Naive thymus-derived CD4-positive, alpha-beta T cell (primary cell): ENCODE measurements at regions of chr1 and their contacts with region 1.

Region 1: GRCh38 chr1:154936555-154937084 is at the start of gene PMVK:
- DNase-seq: peak; percentile 84 to 99 (median 97)
- ATAC-seq: peak; percentile 92
- H3K4me3 ChIP-seq: peak within 1 kb of the TSS; percentile 68
- H3K4me3 Mint-ChIP-seq: peak within 1 kb of the TSS; percentile 86 to 99 (median 95)
- H3K27ac ChIP-seq: peak within 1 kb of the TSS; percentile 97
- H3K27ac Mint-ChIP-seq: peak within 1 kb of the TSS; percentile 96 to 100 (median 99)
- H3K4me1 ChIP-seq: peaks cover 25 to 38% of the 10 kb centered on the region in 2 donors
- H3K4me1 Mint-ChIP-seq: peaks cover 41 to 68% (median 50%) of the 10 kb centered on the region in 7 donors
- H3K27me3 ChIP-seq: no peaks in the 10 kb centered on the region
- H3K27me3 Mint-ChIP-seq: no peaks in the 10 kb centered on the region
- total RNA-seq, gene PMVK: 11.3 to 35.1 (median 12.6) TPM

Region 2: GRCh38 chr1:154479764-154480421 is 456.7 kb before region 1 on chr1:
- CTCF ChIA-PET with region 1: no interaction called
- POLR2A ChIA-PET with region 1: no interaction called
- intact Hi-C with region 1: loop called in 1 of 2 experiments (anchors 2 kb)
- DNase-seq: peak in 8 of 9 donors; percentile 39 to 78 (median 66)
- ATAC-seq: peak; percentile 90
- H3K4me3 ChIP-seq: no peak overlapping the region
- H3K4me3 Mint-ChIP-seq: no peak overlapping the region
- H3K27ac ChIP-seq: no peak overlapping the region
- H3K27ac Mint-ChIP-seq: peak overlapping the region in 1 of 9 donors; percentile 0
- H3K4me1 ChIP-seq: peaks cover 0 to 10% of the 10 kb centered on the region in 2 donors
- H3K4me1 Mint-ChIP-seq: peaks cover 12 to 27% (median 19%) of the 10 kb centered on the region in 7 donors
- H3K27me3 ChIP-seq: no peaks in the 10 kb centered on the region
- H3K27me3 Mint-ChIP-seq: peaks cover 0 to 14% (median 0%) of the 10 kb centered on the region in 5 donors

Region 3: DNA sequence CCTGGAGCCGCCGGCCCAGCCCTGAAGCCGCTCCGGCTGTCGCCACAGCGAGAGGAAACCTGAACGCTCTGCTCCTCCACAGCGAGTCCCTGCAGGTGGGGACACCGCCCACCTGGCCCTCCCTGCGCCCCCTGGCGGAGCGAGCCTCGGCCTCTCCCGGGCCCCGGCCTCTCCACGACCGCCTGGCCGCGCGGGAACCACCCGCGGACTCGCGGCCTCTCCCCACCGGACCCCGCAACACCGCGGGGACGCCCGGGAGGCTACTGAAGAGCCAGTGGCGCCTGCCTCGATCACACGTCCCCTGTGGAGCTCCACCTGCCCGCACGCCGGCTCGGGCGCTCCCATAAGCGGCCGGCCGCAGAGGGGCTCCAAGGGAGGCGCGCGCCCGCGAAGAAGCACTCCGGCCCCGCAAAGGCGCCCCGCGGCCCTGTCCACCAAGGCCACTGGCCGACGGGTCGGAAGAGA is 176.1 kb before region 1 on chr1:
- CTCF ChIA-PET with region 1: no interaction called
- POLR2A ChIA-PET with region 1: no interaction called
- intact Hi-C with region 1: loop called in 1 of 2 experiments (anchors 5 kb)
- DNase-seq: peak; percentile 73 to 91 (median 83)
- ATAC-seq: peak; percentile 98
- H3K4me3 ChIP-seq: peak overlapping the region; percentile 47
- H3K4me3 Mint-ChIP-seq: peak overlapping the region; percentile 29 to 79 (median 74)
- H3K27ac ChIP-seq: peak overlapping the region; percentile 59
- H3K27ac Mint-ChIP-seq: peak overlapping the region in 5 of 9 donors; percentile 62 to 97 (median 79)
- H3K4me1 ChIP-seq: peaks cover 8 to 24% of the 10 kb centered on the region in 2 donors
- H3K4me1 Mint-ChIP-seq: peaks cover 24 to 47% (median 40%) of the 10 kb centered on the region in 7 donors
- H3K27me3 ChIP-seq: peaks cover 0 to 8% of the 10 kb centered on the region in 2 donors
- H3K27me3 Mint-ChIP-seq: peaks cover 0 to 23% (median 5%) of the 10 kb centered on the region in 5 donors

Region 4: GRCh38 chr1:154831462-154831861 is 105.2 kb before region 1 on chr1:
- CTCF ChIA-PET with region 1: no interaction called
- POLR2A ChIA-PET with region 1: no interaction called
- intact Hi-C with region 1: no loop called
- DNase-seq: no peak
- ATAC-seq: no peak
- H3K4me3 ChIP-seq: no peak overlapping the region
- H3K4me3 Mint-ChIP-seq: no peak overlapping the region
- H3K27ac ChIP-seq: no peak overlapping the region
- H3K27ac Mint-ChIP-seq: no peak overlapping the region
- H3K4me1 ChIP-seq: no peaks in the 10 kb centered on the region
- H3K4me1 Mint-ChIP-seq: peaks cover 0 to 11% (median 3%) of the 10 kb centered on the region in 7 donors
- H3K27me3 ChIP-seq: no peaks in the 10 kb centered on the region
- H3K27me3 Mint-ChIP-seq: peaks cover 0 to 5% (median 0%) of the 10 kb centered on the region in 5 donors

Region 5: DNA sequence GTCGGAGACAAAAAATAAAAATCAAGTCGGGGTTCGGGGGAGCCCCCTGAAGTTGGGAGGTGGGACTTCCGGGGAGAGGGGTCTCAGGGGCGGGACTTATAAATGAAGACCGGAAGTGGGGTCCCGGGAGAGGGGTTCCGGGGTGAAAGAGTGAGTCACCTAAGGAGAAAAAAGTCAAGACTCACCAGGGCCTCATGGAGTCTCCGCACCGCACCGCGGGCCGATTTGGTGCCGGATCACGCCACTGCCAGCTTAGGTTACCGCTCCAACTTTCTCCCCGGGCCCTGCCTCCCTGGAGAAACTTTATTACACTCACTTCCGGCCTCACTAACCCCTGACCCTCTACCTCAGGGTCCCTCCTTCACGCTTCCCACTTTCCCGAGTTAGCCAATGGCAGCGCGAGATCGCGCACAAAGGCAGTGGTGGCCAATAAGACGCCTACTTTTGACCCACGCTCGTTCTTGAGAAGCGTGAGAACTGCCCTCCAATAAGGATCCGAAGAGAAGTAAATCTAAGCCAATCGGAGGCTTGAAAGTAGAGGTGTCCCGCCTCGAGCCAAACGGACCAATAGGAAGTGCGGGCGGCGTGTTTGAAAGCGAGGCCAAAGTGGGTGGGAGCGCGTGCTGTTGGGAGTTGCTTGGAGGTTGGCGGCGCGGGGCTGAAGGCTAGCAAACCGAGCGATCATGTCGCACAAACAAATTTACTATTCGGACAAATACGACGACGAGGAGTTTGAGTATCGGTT is 37.6 kb after region 1 on chr1 and contains the start of gene CKS1B:
- CTCF ChIA-PET with region 1: interaction called, 5 read pairs
- POLR2A ChIA-PET with region 1: interaction called, 6 read pairs
- intact Hi-C with region 1: loop called (anchors 1 kb)
- DNase-seq: peak; percentile 86 to 100 (median 98)
- ATAC-seq: peak; percentile 89
- H3K4me3 ChIP-seq: peak within 1 kb of the TSS; percentile 82
- H3K4me3 Mint-ChIP-seq: no peak within 1 kb of the TSS
- H3K27ac ChIP-seq: peak within 1 kb of the TSS; percentile 94
- H3K27ac Mint-ChIP-seq: no peak within 1 kb of the TSS
- H3K4me1 ChIP-seq: peaks cover 28 to 35% of the 10 kb centered on the region in 2 donors
- H3K4me1 Mint-ChIP-seq: peaks cover 27 to 39% (median 31%) of the 10 kb centered on the region in 7 donors
- H3K27me3 ChIP-seq: no peaks in the 10 kb centered on the region
- H3K27me3 Mint-ChIP-seq: no peaks in the 10 kb centered on the region
- total RNA-seq, gene CKS1B: 8.4 to 105 (median 10.2) TPM

Region 6: DNA sequence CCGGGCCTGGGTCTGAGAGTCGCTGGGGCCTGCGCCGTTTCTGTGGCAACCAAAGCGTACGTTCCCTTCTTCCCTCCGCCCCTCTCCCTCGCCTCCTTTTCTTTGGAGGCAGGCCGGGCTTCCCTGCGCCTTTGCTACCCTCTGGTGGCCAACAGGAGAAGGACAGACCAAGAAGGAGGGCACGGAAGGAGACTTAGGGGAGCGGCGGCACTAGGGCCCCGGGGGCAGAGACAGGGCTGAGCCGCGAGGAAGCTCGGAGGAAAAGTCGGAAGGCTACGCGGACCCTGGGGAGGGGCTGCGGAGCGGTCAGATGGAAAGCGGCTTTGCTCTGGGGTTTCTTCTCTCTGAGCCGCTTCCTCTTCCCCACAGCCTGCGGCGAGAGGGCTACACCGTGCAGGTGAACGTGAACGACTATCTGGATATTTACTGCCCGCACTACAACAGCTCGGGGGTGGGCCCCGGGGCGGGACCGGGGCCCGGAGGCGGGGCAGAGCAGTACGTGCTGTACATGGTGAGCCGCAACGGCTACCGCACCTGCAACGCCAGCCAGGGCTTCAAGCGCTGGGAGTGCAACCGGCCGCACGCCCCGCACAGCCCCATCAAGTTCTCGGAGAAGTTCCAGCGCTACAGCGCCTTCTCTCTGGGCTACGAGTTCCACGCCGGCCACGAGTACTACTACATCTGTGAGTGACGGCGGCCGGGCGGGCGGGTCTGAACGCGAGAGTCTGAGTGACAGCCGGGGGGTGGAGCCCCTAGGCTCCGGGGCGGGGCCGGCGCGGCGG is 148.3 kb after region 1 on chr1:
- CTCF ChIA-PET with region 1: no interaction called
- POLR2A ChIA-PET with region 1: interaction called, 3 read pairs
- intact Hi-C with region 1: loop called in 1 of 2 experiments (anchors 1 kb)
- DNase-seq: peak; percentile 87 to 96 (median 93)
- ATAC-seq: peak; percentile 86
- H3K4me3 ChIP-seq: peak overlapping the region; percentile 97
- H3K4me3 Mint-ChIP-seq: peak overlapping the region; percentile 88 to 100 (median 94)
- H3K27ac ChIP-seq: peak overlapping the region; percentile 63
- H3K27ac Mint-ChIP-seq: peak overlapping the region; percentile 88 to 98 (median 93)
- H3K4me1 ChIP-seq: peaks cover 51 to 53% of the 10 kb centered on the region in 2 donors
- H3K4me1 Mint-ChIP-seq: peaks cover 24 to 43% (median 41%) of the 10 kb centered on the region in 7 donors
- H3K27me3 ChIP-seq: peaks cover 28 to 31% of the 10 kb centered on the region in 2 donors
- H3K27me3 Mint-ChIP-seq: peaks cover 17 to 41% (median 23%) of the 10 kb centered on the region in 5 donors